Spleen (tissue), 13 donors: ENCODE measurements at regions of chr3 and their contacts with region 1.

Region 1: DNA sequence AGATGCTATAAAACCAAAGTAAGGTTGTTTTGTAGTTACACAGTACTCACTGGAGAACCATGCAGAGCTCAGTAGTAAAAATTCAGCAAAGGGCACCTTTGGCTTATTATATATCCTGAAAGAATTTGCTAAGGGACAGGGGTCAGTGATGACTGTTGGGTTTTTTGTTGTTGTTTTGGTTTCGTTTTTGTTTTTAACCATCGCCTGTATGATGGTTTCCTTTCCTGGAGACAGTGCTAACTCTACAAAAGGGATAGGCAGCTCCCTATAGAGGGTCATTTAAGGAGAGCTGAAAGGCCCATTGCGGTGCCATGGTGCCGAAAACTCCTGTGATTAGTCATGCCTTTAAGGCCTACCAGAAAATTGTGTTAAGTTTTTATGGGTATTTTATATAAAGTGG is 118.2 kb upstream of the GOLIM4 start:
- DNase-seq: no peak
- H3K4me3 ChIP-seq: peak overlapping the region in 1 of 8 donors; percentile 15
- H3K27ac ChIP-seq: no peak overlapping the region
- H3K4me1 ChIP-seq: peaks cover 0 to 15% (median 0%) of the 10 kb centered on the region in 6 donors
- H3K27me3 ChIP-seq: no peaks in the 10 kb centered on the region
- CTCF ChIP-seq: no peak
- POLR2A ChIP-seq: no peak

Region 2: DNA sequence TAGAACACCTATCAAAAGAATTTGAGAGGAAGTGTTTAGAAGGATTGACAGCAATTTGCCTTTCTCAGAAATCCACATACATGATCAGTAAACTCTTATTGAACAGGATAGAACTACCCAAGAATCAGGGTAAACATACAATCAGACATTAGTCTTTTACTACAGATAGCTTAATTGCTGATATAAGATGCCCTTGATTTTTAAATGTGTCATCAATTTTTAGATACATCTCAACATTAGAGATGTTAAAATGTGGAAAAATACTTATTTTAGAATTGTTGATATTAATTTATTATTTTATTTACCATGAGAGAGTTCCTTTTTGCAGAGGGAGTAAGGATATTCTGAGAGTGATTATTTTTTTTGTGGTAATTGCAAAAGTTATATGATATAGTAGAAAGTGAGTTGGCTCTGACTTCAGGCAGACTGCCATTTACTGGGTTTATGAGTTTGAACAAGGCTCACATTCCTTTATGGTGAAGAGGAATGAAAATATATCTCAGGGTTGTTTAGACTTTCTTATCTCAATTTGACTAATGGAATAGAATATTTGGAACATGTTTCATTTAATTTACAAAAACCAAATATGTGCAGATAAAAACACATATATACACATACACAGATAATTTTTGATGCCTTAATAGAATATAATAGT is 184.6 kb after region 1 on chr3:
- intact Hi-C with region 1: no loop called
- DNase-seq: no peak
- H3K4me3 ChIP-seq: no peak overlapping the region
- H3K27ac ChIP-seq: no peak overlapping the region
- H3K4me1 ChIP-seq: no peaks in the 10 kb centered on the region
- H3K27me3 ChIP-seq: no peaks in the 10 kb centered on the region
- CTCF ChIP-seq: no peak
- POLR2A ChIP-seq: no peak

Region 3: DNA sequence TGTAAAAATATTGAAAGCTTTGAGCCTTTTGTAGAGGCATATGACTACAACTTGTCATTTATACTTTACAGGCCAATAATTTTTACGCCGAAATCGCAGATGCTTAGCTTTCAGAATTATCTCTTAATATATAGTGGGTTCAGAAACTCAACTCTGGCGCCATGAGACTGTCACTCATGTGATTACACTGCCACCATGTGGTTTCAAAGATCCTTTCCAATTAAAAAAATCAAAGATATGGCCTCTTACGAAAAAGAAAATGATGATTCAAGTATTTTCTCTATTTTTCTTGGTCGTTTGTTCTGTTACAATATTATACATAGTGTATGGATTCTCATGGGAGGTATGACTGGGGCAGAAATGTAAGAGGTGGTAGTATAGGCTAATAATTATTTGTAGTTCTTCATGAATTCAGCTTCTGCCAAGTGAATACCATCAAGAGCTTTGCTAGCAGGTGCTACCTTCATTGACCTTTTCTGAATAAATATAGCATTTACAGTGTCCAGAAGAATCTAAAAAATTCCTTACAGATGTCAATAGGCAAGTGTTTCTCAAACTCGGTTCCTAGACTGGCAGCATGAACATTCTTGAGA is 633.5 kb after region 1 on chr3:
- intact Hi-C with region 1: loop called (anchors 10 kb)
- DNase-seq: no peak
- H3K4me3 ChIP-seq: no peak overlapping the region
- H3K27ac ChIP-seq: no peak overlapping the region
- H3K4me1 ChIP-seq: peaks cover 0 to 8% (median 0%) of the 10 kb centered on the region in 6 donors
- H3K27me3 ChIP-seq: peaks cover 0 to 3% (median 0%) of the 10 kb centered on the region in 7 donors
- CTCF ChIP-seq: peak in 7 of 11 experiments; percentile 29 to 42 (median 37)
- POLR2A ChIP-seq: no peak

Region 4: GRCh38 chr3:169764452-169765274 is 1550.7 kb after region 1 on chr3 and contains the start of gene TERC:
- intact Hi-C with region 1: no loop called
- DNase-seq: peak; percentile 97
- H3K4me3 ChIP-seq: peak within 1 kb of the TSS; percentile 52 to 84 (median 66)
- H3K27ac ChIP-seq: peak within 1 kb of the TSS; percentile 95 to 99 (median 98)
- H3K4me1 ChIP-seq: peaks cover 0 to 28% (median 21%) of the 10 kb centered on the region in 6 donors
- H3K27me3 ChIP-seq: no peaks in the 10 kb centered on the region
- CTCF ChIP-seq: peak in 4 of 11 experiments; percentile 3 to 26 (median 24)
- POLR2A ChIP-seq: peak in 2 of 3 donors; percentile 94 to 96
- total RNA-seq, gene TERC: 1.5 to 105 (median 8.2) TPM